Transverse colon (tissue), 4 donors: ENCODE measurements at regions of chr21 and their contacts with region 1.

Region 1: DNA sequence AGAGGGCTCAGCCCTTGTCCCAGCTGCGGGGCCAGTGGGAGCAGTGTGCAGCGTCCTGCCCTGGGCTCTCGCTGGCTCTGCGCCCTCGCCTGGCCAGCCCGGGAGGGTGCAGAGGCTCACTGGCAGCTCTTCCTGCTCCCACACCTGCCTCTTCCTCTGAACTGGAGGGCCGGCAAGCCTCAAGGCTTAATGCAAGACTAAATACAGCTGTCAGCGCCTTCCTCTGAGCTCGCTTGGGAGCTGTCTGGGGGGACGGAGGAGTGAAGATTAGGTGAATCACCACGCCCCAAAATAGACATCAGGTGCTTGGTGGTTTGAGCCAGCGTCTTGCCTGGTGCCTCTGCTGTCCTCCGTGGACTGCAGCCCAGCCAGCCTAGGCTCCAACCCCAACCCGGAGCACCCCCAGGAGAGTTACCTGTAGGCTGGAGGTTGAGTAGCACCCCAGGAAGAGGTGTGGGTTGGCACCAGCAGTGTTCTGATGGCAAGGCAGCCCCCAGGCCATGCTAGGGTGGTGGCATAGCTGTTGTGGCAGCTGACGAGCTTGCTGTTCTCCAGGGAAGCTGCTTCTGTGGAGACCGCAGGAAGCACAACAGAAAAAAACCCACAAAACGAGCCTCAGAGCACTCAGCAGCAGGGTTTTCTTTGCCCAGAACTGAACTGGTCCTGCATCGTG is 36.9 kb downstream of the UMODL1 start:
- DNase-seq: peak; percentile 73
- H3K4me3 ChIP-seq: no peak overlapping the region
- H3K27ac ChIP-seq: peak overlapping the region in 1 of 4 donors; percentile 48
- H3K4me1 ChIP-seq: peaks cover 2 to 17% (median 12%) of the 10 kb centered on the region in 4 donors
- H3K27me3 ChIP-seq: no peaks in the 10 kb centered on the region
- CTCF ChIP-seq: peak; percentile 49 to 90 (median 59)
- EP300 ChIP-seq: no peak
- POLR2A ChIP-seq: no peak

Region 2: DNA sequence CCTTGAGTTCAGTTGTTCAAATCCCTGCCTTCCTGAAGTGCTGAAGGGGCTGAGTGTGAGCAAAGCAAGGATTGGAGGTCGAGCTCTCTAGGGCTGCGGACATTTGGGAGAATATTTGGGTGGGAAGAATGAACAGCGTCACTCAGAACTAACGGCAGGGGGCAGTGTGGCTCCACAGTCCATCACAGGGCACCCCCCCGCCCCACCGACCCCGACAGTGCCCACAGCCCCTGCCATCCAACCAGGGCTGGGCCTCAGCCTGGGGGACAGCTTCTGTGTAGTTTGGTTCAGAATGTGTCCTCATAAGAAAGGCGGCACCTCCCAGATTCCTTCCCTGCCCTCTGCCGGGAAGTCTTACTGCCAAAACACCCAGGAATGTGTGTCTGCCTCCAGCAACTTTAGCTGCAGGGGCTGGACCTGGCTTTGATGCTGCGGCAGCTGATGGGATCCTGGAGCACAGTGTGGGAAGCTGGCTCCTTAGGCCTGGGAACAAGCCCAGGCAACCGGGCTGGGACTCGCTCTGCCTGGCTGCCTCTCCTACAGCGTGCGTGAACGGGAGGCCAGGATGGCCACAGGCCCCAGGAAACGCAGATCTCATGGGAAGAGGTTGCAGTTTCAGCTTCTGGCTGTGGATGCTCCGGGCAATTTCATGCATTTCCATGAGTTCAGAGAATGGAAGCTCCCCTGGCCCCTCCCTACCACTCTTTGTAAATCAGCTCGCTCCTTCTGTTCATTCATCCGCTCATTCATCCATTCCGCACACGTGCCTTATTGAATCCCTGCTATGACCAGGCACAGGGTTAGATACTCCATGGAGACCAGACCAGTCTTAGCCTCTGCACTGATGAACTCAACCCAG is 495.1 kb before region 1 on chr21:
- in situ Hi-C with region 1: loop called in 1 of 4 experiments (anchors 25 kb)
- intact Hi-C with region 1: no loop called
- DNase-seq: peak; percentile 57
- H3K4me3 ChIP-seq: no peak overlapping the region
- H3K27ac ChIP-seq: peak overlapping the region; percentile 20 to 60 (median 52)
- H3K4me1 ChIP-seq: peaks cover 8 to 39% (median 12%) of the 10 kb centered on the region in 4 donors
- H3K27me3 ChIP-seq: peaks cover 11% of the 10 kb centered on the region
- CTCF ChIP-seq: peak; percentile 67 to 75 (median 72)
- EP300 ChIP-seq: peak; percentile 20
- POLR2A ChIP-seq: no peak

Region 3: DNA sequence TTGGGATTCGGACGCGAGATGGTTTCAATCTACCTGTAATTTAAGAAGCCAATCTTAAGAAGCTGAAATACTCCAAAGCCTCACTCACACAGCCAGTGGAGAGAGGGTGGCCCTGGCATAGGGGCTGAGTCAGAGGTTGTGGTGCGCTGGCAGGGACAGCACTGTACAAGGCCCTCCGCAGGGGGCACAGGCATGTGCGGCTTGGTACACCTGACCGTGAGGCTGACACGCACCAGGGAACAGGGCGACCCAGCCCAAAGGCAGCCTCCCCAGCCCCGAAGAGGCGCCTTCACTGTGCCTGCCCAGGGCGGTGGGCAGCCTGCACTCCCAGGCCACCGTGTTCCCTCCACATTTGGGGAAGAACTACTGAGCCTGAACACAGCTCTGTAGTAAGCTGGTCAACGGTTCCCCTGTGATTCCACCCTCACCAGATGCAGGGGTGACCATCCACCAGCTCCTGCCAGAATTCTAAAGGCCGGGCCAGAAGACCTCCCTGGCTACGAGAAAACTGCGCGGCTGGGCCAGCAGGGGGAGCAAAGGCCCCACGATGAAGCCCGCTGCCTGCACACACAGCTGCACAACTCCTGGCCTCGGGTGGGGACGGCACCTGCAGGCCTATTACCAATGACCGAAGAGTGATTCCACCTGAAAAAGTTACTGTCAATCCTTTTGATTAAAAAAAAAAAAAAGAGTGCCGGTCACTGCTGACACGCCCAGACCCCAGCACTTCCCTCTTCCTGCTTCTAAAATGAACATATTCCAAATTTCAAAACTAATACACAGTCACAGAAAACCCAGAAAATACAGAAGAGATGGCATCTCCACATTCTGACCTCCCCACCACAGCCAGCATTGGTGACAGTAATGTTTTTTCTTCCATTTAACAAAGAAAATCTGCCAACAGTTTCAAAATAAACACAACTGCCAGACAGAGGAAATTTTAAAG is 291.5 kb before region 1 on chr21:
- in situ Hi-C with region 1: loop called in 2 of 4 experiments (anchors 25 kb)
- intact Hi-C with region 1: no loop called
- DNase-seq: peak; percentile 75
- H3K4me3 ChIP-seq: no peak overlapping the region
- H3K27ac ChIP-seq: no peak overlapping the region
- H3K4me1 ChIP-seq: peaks cover 0 to 4% (median 2%) of the 10 kb centered on the region in 4 donors
- H3K27me3 ChIP-seq: no peaks in the 10 kb centered on the region
- CTCF ChIP-seq: peak; percentile 63 to 80 (median 71)
- EP300 ChIP-seq: no peak
- POLR2A ChIP-seq: no peak

Region 4: DNA sequence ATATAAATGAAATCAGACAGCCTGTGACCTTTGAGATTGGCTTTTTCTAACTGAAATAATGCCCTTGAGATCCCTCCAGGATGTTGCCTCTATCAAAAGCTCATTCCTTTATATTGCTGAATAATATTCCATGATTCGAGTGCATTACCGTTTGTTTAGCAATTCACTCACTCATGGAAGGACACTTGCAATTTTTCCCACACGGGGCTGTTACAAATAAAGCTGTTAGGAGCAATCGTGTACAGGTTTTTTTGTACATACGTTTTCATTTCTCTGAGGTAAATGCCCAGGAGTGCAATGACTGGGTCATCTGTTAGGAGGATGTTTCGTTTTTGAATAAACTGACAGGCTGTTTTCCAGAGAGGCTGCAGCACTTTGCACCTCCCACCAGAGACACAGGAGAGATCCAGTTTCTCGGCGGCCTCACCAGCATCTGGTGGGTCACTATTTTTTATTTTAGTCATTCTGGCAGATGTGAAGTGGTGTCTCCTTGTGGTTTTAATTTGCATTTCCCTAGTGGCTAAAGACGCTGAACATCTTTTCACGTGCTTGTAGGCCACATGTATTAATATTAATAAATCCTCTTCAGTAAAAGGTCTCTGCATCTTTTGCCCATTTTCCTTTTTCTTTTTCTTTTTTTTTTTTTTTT is 239.8 kb before region 1 on chr21:
- in situ Hi-C with region 1: loop called in 1 of 4 experiments (anchors 25 kb)
- intact Hi-C with region 1: no loop called
- DNase-seq: peak; percentile 43
- H3K4me3 ChIP-seq: no peak overlapping the region
- H3K27ac ChIP-seq: peak overlapping the region in 1 of 4 donors; percentile 23
- H3K4me1 ChIP-seq: peaks cover 0 to 3% (median 0%) of the 10 kb centered on the region in 4 donors
- H3K27me3 ChIP-seq: no peaks in the 10 kb centered on the region
- CTCF ChIP-seq: no peak
- EP300 ChIP-seq: no peak
- POLR2A ChIP-seq: no peak

Region 5: GRCh38 chr21:41926117-41926806 is 181.8 kb before region 1 on chr21:
- in situ Hi-C with region 1: loop called in 1 of 4 experiments (anchors 25 kb)
- intact Hi-C with region 1: no loop called
- DNase-seq: no peak
- H3K4me3 ChIP-seq: peak overlapping the region; percentile 29 to 48 (median 32)
- H3K27ac ChIP-seq: peak overlapping the region; percentile 83 to 90 (median 86)
- H3K4me1 ChIP-seq: peaks cover 7 to 48% (median 30%) of the 10 kb centered on the region in 4 donors
- H3K27me3 ChIP-seq: no peaks in the 10 kb centered on the region
- CTCF ChIP-seq: no peak
- EP300 ChIP-seq: no peak
- POLR2A ChIP-seq: no peak

Region 6: DNA sequence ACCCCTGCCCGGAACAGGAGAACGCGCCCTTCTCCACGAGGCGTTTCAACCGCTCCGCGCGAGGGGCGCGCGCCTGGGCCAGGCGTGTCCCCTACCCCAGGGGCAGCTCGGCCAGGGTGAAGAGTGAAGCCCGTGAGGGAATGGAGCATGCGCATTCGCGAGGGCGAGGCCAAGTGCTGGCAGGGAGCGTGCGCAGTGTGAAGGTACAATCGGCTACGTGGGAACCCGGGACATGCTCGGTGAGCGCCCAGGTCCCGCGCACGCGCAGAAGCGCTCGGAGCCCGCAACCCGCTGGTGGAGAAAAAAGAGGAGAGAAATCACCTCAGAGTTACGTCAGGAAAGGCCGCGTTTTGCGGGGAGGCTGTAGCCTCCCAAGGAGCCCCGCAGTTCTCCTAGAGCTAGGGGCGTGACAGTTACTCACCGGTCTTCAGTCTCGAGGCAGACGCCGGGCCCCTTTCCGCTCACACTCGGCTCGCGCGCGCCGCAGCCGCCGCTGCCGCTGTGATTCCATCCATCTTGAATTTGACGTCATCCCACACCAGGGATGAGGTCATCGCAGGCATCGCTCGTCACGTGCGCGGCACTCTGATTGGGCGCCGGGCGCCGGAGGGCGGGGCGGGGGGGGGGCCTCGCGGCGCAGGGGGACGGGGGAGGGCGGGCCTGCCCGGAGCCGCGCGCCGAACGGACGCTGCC is 98.0 kb before region 1 on chr21 and contains the start of gene ZBTB21:
- in situ Hi-C with region 1: loop called in 2 of 4 experiments (anchors 5 to 10 kb)
- intact Hi-C with region 1: loop called (anchors 1 kb)
- DNase-seq: peak; percentile 99
- H3K4me3 ChIP-seq: peak within 1 kb of the TSS; percentile 69 to 99 (median 91)
- H3K27ac ChIP-seq: peak within 1 kb of the TSS; percentile 96 to 99 (median 99)
- H3K4me1 ChIP-seq: peaks cover 5 to 31% (median 19%) of the 10 kb centered on the region in 4 donors
- H3K27me3 ChIP-seq: no peaks in the 10 kb centered on the region
- CTCF ChIP-seq: no peak
- EP300 ChIP-seq: no peak
- POLR2A ChIP-seq: peak; percentile 95
- total RNA-seq, gene ZBTB21: 5.2 to 19.5 (median 9.7) TPM